ENCODE measurements at regions of chr1 and their contacts with region 1.

Region 1: DNA sequence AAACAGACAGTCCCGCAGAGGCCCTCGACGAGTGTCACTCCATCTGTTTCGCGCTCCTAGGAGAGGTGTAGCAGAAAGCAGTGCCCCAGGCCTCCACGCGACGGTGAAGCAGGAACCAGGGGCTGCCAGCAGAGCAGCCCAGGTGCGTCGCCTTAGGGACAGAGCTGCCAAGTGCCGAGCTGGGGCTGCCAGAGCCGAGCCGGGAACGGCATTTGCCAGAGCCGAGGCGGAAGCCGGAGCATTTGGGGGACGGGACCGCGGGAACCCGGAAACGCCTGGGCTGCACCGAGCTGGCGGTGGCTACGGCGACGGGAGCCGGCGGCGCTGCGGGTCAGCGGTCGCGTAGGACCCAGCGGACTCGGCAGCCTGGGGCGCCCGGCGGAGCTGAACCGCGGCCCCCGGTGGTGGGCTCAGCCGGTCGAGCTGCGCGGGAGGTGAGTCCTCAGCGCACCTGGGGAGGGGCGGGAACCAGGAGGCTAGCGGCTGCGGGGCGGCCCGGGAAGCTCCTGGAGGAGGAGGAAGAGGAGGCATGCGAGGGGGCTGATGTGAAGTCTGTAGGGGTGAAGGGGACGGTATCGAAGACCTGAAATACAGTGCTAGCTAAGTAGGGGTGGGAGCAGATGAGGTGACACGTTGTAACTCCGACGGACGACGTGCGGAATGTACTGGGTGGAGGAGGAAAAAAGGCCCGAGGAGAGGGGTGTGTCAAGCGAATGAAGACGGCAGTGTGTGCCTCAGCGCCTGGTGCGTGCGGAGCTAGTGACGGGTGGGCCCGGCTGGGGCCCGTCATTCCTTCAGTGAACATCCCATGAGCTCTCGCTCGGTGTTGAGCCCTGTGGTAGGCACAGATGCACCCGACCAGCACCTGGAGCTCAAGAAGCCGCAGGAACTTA is at the start of gene SLC35A3:
- DNase-seq: peak; percentile 79
- H3K4me3 Mint-ChIP-seq: peak within 1 kb of the TSS; percentile 96
- H3K27ac Mint-ChIP-seq: peak within 1 kb of the TSS; percentile 86
- H3K4me1 Mint-ChIP-seq: peaks cover 30% of the 10 kb centered on the region
- H3K27me3 Mint-ChIP-seq: no peaks in the 10 kb centered on the region
- total RNA-seq, gene SLC35A3: 16.4 to 17.7 TPM

Region 2: DNA sequence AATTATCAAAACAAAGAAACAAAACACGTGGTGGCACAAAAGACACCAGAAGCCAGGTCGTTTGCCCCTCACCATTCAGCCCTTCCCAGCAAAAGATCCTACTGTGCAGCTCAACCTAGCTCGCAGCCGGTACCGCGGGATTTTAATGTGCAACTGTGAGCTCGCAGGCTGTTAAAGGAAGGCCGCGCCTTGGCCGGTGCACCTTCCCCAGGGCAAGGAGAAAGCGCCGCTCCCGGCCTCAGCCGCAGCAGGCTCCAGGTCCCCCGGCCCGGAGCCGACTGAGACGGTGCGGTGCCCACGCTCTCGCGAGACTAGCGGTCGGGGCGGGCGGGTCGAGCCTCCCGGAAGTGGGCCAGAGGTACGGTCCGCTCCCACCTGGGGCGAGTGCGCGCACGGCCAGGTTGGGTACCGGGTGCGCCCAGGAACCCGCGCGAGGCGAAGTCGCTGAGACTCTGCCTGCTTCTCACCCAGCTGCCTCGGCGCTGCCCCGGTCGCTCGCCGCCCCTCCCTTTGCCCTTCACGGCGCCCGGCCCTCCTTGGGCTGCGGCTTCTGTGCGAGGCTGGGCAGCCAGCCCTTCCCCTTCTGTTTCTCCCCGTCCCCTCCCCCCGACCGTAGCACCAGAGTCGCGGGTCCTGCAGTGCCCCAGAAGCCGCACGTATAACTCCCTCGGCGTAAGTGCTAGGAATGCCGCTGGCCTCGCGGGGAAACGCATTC is 120.1 kb before region 1 on chr1 and contains the start of gene AGL:
- CTCF ChIA-PET with region 1: no interaction called
- POLR2A ChIA-PET with region 1: interaction called, 11 read pairs
- DNase-seq: peak; percentile 88
- H3K4me3 Mint-ChIP-seq: peak within 1 kb of the TSS; percentile 85
- H3K27ac Mint-ChIP-seq: peak within 1 kb of the TSS; percentile 75
- H3K4me1 Mint-ChIP-seq: peaks cover 24% of the 10 kb centered on the region
- H3K27me3 Mint-ChIP-seq: no peaks in the 10 kb centered on the region
- total RNA-seq, gene AGL: 13.0 to 13.9 TPM

Region 3: GRCh38 chr1:100127226-100127625 is 157.3 kb after region 1 on chr1:
- CTCF ChIA-PET with region 1: no interaction called
- POLR2A ChIA-PET with region 1: no interaction called
- DNase-seq: no peak
- H3K4me3 Mint-ChIP-seq: no peak overlapping the region
- H3K27ac Mint-ChIP-seq: no peak overlapping the region
- H3K4me1 Mint-ChIP-seq: peaks cover 27% of the 10 kb centered on the region
- H3K27me3 Mint-ChIP-seq: no peaks in the 10 kb centered on the region